Mammary epithelial cell (primary cell): ENCODE measurements at regions of chr4 and their contacts with region 1.

Region 1: DNA sequence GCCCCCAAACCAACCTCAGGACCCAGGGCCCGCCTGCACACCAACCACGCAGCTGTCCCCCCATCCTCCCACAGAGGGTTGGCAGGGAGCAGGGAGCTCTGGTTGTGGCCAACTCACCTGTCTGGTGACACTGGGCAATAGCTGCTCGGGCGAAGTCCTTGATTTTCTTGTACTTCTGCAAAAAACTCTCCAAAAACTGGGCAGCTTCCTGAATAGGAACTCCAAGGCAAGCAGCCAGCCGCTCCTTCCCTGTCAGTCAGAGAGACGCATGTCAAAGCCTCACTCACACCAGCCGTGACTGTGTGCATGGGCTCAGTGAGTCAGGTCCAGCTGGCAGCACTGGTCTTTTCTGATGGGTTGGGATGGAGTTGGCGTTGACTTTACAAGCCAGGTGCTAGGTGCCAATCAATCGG is 26.4 kb downstream of the NAT8L start:
- DNase-seq: no peak
- H3K4me3 ChIP-seq: no peak overlapping the region
- H3K27ac ChIP-seq: no peak overlapping the region
- H3K4me1 ChIP-seq: no peaks in the 10 kb centered on the region
- H3K27me3 ChIP-seq: no peaks in the 10 kb centered on the region
- CTCF ChIP-seq: no peak

Region 2: GRCh38 chr4:1463088-1463926 is 622.2 kb before region 1 on chr4:
- CTCF ChIA-PET with region 1: no interaction called
- dilution Hi-C with region 1: no loop called
- in situ Hi-C with region 1: loop called in 1 of 2 experiments (anchors 25 kb)
- intact Hi-C with region 1: no loop called
- DNase-seq: no peak
- H3K4me3 ChIP-seq: no peak overlapping the region
- H3K27ac ChIP-seq: no peak overlapping the region
- H3K4me1 ChIP-seq: no peaks in the 10 kb centered on the region
- H3K27me3 ChIP-seq: peaks cover 12% of the 10 kb centered on the region
- CTCF ChIP-seq: no peak